ENCODE measurements at regions of chr11 and their contacts with region 1.

Region 1: DNA sequence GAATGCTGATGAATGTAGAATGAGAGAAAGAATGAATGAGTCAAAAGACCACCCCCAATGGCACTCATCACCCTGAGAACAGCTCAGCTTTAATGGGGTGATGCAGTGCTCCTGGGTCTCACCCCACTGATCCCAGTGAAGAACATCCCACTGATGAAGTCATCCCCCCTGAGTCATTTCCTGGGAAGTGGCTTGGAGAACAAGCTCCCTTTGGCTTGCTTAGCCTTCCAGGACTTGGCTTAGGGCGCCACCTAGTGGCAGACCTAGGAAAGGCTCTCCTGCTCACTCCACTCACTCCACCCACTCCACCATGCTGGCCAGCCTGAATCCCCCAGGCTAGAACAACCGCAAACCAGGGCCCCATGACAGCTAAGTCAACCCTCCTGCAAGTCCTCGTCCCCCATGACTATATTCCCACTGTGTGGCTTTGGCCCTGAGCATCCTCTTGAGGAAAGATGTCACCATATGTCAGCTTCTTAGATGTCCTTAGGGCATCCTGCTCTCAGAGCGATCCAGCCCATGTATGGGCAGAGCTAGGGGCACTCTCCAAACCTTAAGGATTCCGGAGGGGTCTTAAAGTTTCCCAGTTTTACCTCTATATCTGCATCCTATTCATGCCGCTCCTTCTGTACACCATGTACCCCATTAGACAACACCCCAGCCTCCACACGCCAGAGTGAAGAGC is 17.8 kb upstream of the TMPRSS13 start:
- DNase-seq: peak; percentile 69 to 91
- H3K4me3 ChIP-seq: no peak overlapping the region
- H3K4me1 ChIP-seq: no peaks in the 10 kb centered on the region
- H3K27me3 ChIP-seq: peaks cover 5% of the 10 kb centered on the region; the same call in 1 of the 2 replicates

Region 2: DNA sequence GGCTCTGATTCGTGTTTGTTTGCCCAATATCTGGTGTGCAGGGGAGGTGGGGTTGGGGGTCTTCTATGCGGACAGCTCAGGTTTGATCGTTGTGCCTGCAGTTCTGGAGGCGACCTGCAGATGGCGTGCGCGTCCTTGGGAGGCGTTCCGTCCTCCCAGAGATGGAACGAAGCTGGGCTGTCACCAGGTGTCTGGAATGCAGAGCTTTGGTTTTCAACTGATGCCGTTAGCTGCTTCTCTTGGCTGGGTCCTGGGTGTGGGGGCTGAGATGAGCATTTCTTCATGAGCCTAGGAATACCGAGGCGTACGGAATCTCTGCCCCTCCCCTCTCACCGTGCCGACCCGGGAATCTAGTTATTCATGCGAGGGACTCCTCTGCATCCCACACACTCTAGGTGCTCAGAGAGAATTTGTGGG is 520.7 kb before region 1 on chr11:
- in situ Hi-C with region 1: loop called (anchors 10 kb)
- DNase-seq: peak; percentile 37 to 90
- H3K4me3 ChIP-seq: no peak overlapping the region
- H3K4me1 ChIP-seq: no peaks in the 10 kb centered on the region
- H3K27me3 ChIP-seq: peaks cover 2% of the 10 kb centered on the region

Region 3: DNA sequence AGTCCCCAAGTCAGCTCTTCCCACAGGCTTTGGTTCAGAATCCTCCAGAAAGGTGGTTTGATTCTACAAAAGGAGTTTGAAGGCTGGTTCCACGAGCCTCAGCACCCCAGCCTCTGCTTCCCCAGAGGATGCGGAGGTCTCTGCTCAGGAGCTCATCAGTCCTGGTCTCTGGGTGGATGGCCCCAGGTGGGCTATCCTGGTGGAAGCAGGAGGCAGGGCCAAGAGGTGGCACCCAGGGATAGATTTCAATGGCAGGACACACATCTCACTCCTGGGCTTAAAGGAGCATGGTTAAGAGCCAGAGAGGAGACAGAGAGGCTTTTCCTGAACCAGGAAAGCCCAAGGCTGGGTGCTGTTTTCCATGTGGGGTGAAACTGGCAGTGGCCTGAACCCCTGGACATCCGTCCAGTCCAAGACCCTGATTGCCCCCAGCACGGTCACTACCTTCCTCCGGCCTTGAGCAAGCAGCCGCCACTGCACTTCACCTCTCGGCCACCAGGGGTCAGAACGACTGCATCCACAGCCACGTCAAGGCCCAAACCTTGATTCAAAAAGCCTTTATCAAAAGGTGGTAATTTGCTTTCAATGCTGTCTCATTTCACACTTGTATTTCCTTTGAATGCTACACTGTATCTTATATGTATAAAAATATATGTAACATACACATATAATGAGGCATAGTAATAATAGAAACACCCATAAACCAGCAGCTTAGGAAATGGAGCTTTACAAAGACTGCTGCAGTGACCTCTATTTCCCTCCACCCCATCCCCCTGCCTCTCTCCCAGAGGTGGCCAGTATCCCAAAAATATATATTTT is 103.1 kb before region 1 on chr11:
- in situ Hi-C with region 1: loop called (anchors 5 kb)
- DNase-seq: peak; percentile 48 to 89
- H3K4me3 ChIP-seq: no peak overlapping the region
- H3K4me1 ChIP-seq: no peaks in the 10 kb centered on the region; the same call in 1 of the 2 replicates
- H3K27me3 ChIP-seq: no peaks in the 10 kb centered on the region

Region 4: DNA sequence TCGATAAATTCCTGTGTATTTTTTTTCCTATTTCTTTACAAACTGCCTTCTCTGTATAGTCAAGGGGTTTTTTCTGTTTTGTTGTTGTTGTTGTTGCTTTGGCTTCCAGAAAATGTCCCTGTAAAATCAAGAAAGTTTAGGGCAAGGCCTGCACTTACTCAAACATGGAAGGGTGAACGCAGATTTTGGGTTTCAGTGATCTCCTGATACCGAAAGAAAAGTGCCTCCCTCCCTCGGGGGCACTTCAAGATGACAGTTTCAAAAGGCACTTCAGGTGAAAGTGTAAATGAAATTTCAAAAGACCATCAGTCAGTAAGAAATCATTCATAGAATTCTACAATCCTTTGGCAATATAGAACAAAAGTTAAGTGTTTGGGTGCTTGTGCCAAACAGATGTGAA is 86.5 kb after region 1 on chr11:
- in situ Hi-C with region 1: no loop called
- DNase-seq: no peak
- H3K4me3 ChIP-seq: no peak overlapping the region
- H3K4me1 ChIP-seq: no peaks in the 10 kb centered on the region
- H3K27me3 ChIP-seq: peaks cover 8% of the 10 kb centered on the region; the same call in 1 of the 2 replicates

Measured in HAP-1 (cell line).